ENCODE measurements at regions of chr5 and their contacts with region 1.

Region 1: GRCh38 chr5:163473635-163474243 is 13.3 kb downstream of the HMMR start:
- DNase-seq: peak; percentile 21
- H3K4me3 ChIP-seq: no peak overlapping the region
- H3K27ac ChIP-seq: no peak overlapping the region
- H3K4me1 ChIP-seq: no peaks in the 10 kb centered on the region
- CTCF ChIP-seq: peak; percentile 69

Region 2: GRCh38 chr5:162128117-162128516 is 1345.6 kb before region 1 on chr5:
- CTCF ChIA-PET with region 1: no interaction called
- POLR2A ChIA-PET with region 1: no interaction called
- intact Hi-C with region 1: no loop called
- DNase-seq: no peak
- H3K4me3 ChIP-seq: no peak overlapping the region
- H3K27ac ChIP-seq: no peak overlapping the region
- H3K4me1 ChIP-seq: no peaks in the 10 kb centered on the region
- CTCF ChIP-seq: no peak

Region 3: DNA sequence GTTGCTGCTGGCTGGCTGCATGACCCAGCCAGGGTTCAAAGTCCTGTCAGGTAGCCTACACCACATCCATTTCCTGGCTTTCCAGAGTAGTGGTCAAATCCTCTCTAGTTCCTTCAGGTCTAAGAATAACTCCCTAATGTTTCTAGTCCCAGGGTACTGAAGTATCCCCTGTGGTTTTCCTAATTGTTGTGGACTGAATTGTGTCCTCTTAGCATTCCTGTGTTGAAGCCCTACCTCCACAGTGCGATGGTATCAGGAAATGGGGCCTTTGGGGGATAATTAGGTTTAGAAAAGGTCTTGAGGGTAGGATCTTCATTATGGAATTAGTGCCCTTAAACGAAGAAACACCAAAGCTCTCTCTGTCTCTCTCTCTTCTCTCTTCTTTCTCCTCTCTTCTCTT is 228.2 kb before region 1 on chr5:
- CTCF ChIA-PET with region 1: no interaction called
- POLR2A ChIA-PET with region 1: no interaction called
- intact Hi-C with region 1: no loop called
- DNase-seq: no peak
- H3K4me3 ChIP-seq: no peak overlapping the region
- H3K27ac ChIP-seq: no peak overlapping the region
- H3K4me1 ChIP-seq: no peaks in the 10 kb centered on the region
- CTCF ChIP-seq: no peak

Region 4: DNA sequence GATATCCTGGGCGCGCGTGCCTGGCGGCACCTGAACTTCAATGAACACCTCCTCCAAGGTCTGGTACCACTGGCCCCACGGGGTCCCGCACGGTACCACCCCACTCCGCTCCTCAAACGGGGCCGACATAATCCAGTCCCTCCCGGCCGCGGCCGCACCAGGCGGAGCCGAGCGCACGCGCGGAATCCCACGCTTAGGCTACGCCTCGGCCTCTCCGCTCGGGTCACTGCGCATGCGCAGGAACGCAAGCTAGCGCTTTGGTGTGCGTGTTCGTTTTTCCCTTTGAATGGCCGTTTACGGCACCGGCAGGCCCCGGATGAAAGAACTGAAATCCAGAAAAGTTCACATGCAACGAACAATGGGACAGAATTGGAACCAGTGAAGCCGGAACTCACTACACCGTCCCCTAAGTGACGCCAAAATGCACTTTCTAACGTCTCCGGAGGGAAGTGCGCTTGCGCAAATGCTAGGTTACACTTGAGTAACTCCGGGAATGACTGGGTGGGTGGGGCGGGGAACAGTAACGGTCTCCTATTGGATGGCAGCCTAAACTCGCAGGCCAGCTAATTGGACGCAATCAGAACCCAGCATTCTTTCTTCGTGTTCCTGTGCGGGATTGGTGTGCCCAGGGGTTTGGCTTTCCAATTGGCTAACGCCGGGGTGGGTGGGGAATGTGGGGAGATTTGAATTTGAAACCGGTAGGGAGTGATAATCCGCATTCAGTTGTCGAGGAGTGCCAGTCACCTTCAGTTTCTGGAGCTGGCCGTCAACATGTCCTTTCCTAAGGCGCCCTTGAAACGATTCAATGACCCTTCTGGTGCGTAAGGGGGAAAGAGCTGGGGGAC is 13.6 kb before region 1 on chr5 and contains the starts of genes HMMR and NUDCD2:
- CTCF ChIA-PET with region 1: no interaction called
- POLR2A ChIA-PET with region 1: interaction called, 21 read pairs
- intact Hi-C with region 1: no loop called
- DNase-seq: peak; percentile 98
- H3K4me3 ChIP-seq: peak within 1 kb of the TSS; percentile 90
- H3K27ac ChIP-seq: peak within 1 kb of the TSS; percentile 92
- H3K4me1 ChIP-seq: peaks cover 43% of the 10 kb centered on the region
- CTCF ChIP-seq: no peak; the same call in 1 of the 2 replicates
- total RNA-seq, gene HMMR: 44.1 and 63.2 TPM in 2 replicates
- total RNA-seq, gene NUDCD2: 30.0 and 59.0 TPM in 2 replicates

Region 5: DNA sequence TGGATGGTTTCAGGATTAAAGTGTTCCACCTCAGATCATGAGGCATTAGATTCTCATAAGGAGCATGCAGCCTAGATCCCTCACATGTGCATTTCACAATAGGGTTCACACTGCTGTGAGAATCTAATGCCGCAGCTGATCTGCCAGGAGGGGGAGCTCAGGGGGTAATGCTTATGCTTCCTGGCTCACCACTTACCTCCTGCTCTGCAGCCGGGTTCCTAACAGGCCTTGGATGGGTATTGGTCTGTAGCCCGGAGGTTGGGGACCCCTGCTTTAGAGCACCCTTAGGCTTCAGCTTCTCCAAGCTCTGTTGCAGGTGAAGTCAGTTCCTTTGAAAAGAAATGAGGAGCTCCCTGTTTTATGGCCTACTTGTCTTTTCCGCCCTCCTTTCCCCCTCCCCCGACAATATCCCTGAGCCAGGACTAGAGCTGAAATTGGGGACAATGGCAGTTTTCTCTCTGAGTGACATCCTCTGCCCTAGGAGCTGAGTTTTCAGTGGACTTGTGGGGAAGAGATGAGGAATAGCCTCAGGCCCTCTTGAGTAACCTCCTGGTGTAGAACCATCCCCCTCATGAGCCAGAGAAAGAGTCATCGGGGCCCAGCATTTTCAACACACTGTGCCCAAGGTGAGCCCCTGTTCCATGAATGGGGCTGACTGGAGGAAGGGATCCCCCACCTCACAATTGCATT is 15.5 kb after region 1 on chr5:
- CTCF ChIA-PET with region 1: interaction called, 3 read pairs
- POLR2A ChIA-PET with region 1: interaction called, 12 read pairs
- intact Hi-C with region 1: no loop called
- DNase-seq: no peak
- H3K4me3 ChIP-seq: no peak overlapping the region
- H3K27ac ChIP-seq: no peak overlapping the region
- H3K4me1 ChIP-seq: no peaks in the 10 kb centered on the region
- CTCF ChIP-seq: peak; percentile 42